ENCODE measurements at regions of chr20 and their contacts with region 1.

Region 1: DNA sequence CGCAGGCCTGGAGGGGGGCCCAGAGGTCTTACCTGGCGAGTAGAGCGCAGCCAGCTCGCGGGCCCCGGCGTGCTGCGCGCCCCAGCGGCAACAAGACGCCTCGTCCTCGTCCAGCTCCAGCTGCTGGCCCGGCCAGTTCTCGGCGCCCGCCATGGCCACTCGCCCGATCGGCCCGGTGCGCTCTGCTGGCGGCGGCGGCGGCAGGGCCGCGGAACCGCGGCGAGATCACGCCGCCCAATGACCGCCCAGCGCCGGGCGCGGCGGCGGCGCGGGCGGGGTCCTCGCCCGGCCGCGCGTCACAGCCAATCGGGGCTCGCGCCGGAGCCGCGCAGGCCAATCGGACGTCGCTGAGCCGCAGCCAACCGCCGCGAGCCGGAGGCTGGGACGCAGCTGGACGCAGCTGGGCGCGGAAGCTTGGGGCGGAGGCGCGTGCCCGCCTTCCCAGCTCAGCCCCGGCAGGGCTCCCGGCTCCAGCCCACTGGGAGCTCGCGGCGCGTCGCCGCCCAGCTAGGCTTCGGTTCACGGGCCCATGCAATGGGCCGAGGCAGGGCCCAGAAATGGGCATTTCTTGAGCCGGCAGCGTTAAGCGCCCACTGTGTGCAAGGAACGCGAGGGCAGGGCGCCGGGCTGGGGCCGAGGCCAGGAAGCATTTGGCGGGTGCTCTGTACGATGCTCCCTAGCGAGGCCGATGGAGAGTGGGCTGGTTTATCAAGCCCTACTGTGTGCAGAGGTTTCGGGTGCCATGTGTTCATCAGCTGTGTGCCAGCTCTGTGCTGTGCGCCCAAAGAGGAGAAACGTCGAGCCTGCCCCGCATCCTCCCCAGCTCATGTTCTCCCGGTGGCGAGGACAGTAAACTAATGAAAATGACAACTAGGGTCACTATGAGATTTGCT is at the start of gene PEDS1:
- DNase-seq: peak; percentile 77 to 96 (median 88)
- H3K4me3 ChIP-seq: peak within 1 kb of the TSS; percentile 78 to 100 (median 97)
- H3K27ac ChIP-seq: peak within 1 kb of the TSS; percentile 36 to 98 (median 95)
- H3K27me3 ChIP-seq: no peaks in the 10 kb centered on the region
- CTCF ChIP-seq: peak in 13 of 56 donors; percentile 0 to 29 (median 9)
- total RNA-seq, gene PEDS1: 14.7 to 51.9 (median 24.0) TPM

Region 2: DNA sequence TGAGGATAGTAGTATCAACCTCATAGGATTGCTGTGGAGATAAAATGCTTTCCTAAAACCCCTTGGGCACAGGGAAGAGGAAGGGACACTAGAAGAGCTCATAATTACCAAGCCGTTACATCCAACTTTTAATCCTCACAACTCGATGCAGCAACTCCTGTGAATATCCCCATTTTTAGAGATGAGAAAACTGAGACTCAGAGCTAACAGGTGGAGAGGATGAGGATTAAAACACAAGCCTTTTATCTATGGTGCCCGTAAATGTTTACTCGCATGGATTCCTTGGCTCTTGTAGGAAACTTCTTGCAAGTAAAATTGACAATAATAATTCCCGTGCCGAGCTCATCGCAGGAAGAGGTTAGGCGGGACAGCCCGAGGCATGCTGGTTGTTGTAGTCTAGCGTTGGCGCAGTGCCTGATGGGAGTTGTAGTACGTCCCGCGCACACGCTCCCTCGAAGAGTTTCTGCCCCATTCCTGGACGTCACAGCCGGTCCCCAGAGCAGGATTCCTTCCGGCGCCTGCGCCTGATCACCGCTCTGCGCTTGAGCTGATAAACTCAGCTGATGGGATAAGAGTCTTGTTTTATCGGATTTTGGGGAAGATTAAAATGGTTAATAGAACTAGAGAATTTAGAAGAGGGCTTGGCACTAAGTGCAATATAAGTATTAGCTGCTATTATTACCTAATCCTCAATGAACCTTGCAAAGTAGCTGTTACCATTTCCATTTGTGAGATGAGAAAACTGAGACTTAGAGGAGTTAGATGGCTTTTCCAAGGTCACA is 37.9 kb before region 1 on chr20:
- intact Hi-C with region 1: loop called (anchors 1 to 5 kb)
- DNase-seq: peak; percentile 97 to 99 (median 97)
- H3K4me3 ChIP-seq: peak overlapping the region; percentile 42 to 78 (median 65)
- H3K27ac ChIP-seq: peak overlapping the region; percentile 5 to 98 (median 83)
- H3K27me3 ChIP-seq: no peaks in the 10 kb centered on the region
- CTCF ChIP-seq: peak in 35 of 56 donors; percentile 7 to 62 (median 32)

Region 3: GRCh38 chr20:50138479-50139393 is 15.0 kb before region 1 on chr20:
- intact Hi-C with region 1: loop called in 1 of 2 experiments (anchors 2 kb)
- DNase-seq: peak; percentile 22 to 91 (median 83)
- H3K4me3 ChIP-seq: peak overlapping the region in 21 of 59 donors; percentile 0 to 42 (median 20)
- H3K27ac ChIP-seq: peak overlapping the region; percentile 76 to 96 (median 91)
- H3K27me3 ChIP-seq: no peaks in the 10 kb centered on the region
- CTCF ChIP-seq: peak in 55 of 56 donors; percentile 29 to 75 (median 54)

Measured in dorsolateral prefrontal cortex (tissue), 120 donors.